B cell (primary cell): ENCODE measurements at regions of chr2 and their contacts with region 1.

Region 1: GRCh38 chr2:161063157-161063954 is 96.9 kb upstream of the TANK start:
- DNase-seq: peak; percentile 77
- ATAC-seq: peak; percentile 89
- H3K4me3 ChIP-seq: no peak overlapping the region
- H3K4me3 Mint-ChIP-seq: no peak overlapping the region
- H3K27ac ChIP-seq: no peak overlapping the region
- H3K27ac Mint-ChIP-seq: no peak overlapping the region
- H3K4me1 ChIP-seq: peaks cover 0 to 3% of the 10 kb centered on the region in 2 donors
- H3K4me1 Mint-ChIP-seq: peaks cover 4% of the 10 kb centered on the region
- H3K27me3 ChIP-seq: no peaks in the 10 kb centered on the region
- H3K27me3 Mint-ChIP-seq: no peaks in the 10 kb centered on the region
- CTCF ChIP-seq: peak; percentile 97

Region 2: DNA sequence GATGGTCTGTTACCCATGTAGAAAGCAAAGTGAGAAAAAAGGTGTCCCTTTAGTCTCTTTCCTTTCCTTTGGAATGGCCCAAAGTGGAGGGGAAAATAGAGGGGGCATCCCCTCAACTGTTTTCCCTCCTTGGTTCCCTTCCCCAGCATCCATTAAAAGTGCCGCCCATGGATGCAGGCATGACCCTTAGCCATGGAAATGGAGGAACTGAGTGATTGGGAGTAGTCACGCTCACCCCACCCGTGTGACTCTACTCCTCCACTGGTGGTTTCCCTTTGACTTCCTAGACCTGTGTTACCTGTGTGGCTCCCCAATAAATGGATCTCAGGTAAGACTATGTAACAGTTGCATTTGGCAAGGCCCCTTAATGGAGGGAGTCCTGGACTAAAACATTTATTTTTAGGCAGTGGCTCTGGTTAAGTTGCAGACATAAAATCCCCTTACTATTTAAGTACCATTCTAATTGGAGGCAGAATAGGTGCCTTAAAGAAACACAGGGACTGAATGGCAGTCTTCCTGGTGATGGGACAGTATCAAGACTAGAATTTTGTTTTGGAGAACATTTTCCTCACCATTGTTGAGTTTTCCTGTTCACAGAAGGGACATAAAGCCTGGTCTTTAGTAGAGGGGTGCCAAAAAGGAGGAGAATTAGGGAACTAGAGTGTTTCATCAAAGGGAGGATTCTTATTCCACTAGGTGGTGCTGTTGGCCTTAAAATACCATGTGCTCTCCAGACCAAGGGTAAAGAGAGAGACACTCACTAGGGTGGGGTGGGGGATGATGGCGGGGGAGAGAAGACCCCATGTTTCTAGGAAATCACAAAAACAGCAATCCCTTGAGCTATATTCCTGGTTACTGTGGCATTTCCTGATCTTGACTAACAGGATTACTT is 975.3 kb before region 1 on chr2:
- CTCF ChIA-PET with region 1: no interaction called
- POLR2A ChIA-PET with region 1: no interaction called
- intact Hi-C with region 1: no loop called
- DNase-seq: peak; percentile 6
- ATAC-seq: no peak
- H3K4me3 ChIP-seq: no peak overlapping the region
- H3K4me3 Mint-ChIP-seq: no peak overlapping the region
- H3K27ac ChIP-seq: no peak overlapping the region
- H3K27ac Mint-ChIP-seq: no peak overlapping the region
- H3K4me1 ChIP-seq: no peaks in the 10 kb centered on the region
- H3K4me1 Mint-ChIP-seq: no peaks in the 10 kb centered on the region
- H3K27me3 ChIP-seq: peaks cover 0 to 6% (median 0%) of the 10 kb centered on the region in 4 experiments
- H3K27me3 Mint-ChIP-seq: peaks cover 9% of the 10 kb centered on the region
- CTCF ChIP-seq: no peak

Region 3: DNA sequence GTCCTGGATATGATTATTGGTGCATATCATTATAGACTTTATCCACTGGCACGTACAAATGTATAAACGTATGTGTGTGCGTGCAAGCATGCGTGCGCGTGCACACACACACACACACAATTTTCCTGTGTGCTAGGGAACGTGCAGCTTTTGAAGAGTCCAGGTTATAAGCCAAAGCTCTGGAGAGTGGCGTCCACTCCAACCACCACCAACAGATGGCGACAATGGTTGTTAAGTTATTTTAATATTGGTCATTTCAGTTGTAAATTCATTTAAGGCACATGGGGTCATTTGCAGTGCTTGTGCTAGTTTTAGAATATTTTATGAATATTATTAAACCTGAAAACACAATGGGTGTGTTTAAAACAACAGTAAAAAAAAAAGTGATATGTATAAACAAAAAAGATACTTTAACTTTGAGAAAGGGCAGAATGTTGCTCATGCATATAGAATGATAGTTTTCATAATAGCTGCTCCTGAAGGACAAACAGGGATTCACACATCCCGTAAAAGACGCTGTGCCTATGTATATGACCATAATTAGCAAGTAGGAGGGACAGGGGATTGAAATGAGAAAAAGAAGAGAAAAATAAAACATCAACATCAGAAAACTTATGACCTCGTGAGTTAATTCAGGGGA is 739.1 kb before region 1 on chr2:
- CTCF ChIA-PET with region 1: interaction called, 12 read pairs
- POLR2A ChIA-PET with region 1: no interaction called
- intact Hi-C with region 1: loop called (anchors 2 kb)
- DNase-seq: peak; percentile 55
- ATAC-seq: peak; percentile 14
- H3K4me3 ChIP-seq: no peak overlapping the region
- H3K4me3 Mint-ChIP-seq: no peak overlapping the region
- H3K27ac ChIP-seq: no peak overlapping the region
- H3K27ac Mint-ChIP-seq: no peak overlapping the region
- H3K4me1 ChIP-seq: peaks cover 4 to 14% of the 10 kb centered on the region in 2 donors
- H3K4me1 Mint-ChIP-seq: peaks cover 56% of the 10 kb centered on the region
- H3K27me3 ChIP-seq: no peaks in the 10 kb centered on the region
- H3K27me3 Mint-ChIP-seq: no peaks in the 10 kb centered on the region
- CTCF ChIP-seq: peak; percentile 81

Region 4: DNA sequence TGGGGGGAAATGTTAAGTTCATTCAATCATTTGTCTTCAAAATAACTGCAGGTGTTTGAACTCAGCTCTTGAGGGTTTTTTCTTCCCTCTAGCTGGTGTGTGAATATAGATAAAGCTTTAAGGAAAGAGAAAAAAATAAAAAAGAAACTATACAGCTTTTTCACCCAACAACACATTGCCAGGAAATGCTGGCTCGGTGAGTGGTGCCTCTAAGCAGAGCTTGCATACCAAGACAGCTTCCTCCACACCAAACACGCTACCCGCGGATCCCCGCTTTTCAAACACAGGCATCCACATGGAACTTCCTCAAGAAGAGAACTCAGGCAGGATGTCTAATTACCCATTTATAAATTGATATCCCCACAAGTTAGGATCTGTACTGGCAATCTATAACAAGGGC is 27.1 kb after region 1 on chr2:
- CTCF ChIA-PET with region 1: interaction called, 52 read pairs
- POLR2A ChIA-PET with region 1: no interaction called
- intact Hi-C with region 1: loop called (anchors 2 kb)
- DNase-seq: peak; percentile 58
- ATAC-seq: peak; percentile 56
- H3K4me3 ChIP-seq: peak overlapping the region; percentile 11 to 58 (median 23)
- H3K4me3 Mint-ChIP-seq: peak overlapping the region; percentile 60
- H3K27ac ChIP-seq: peak overlapping the region in 1 of 2 donors; percentile 43
- H3K27ac Mint-ChIP-seq: peak overlapping the region; percentile 84
- H3K4me1 ChIP-seq: peaks cover 30 to 33% of the 10 kb centered on the region in 2 donors
- H3K4me1 Mint-ChIP-seq: peaks cover 45% of the 10 kb centered on the region
- H3K27me3 ChIP-seq: no peaks in the 10 kb centered on the region
- H3K27me3 Mint-ChIP-seq: no peaks in the 10 kb centered on the region
- CTCF ChIP-seq: no peak

Region 5: GRCh38 chr2:161160226-161161069 is 97.1 kb after region 1 on chr2 and contains the start of gene TANK:
- CTCF ChIA-PET with region 1: interaction called, 5 read pairs
- POLR2A ChIA-PET with region 1: no interaction called
- intact Hi-C with region 1: loop called (anchors 5 kb)
- DNase-seq: peak; percentile 96
- ATAC-seq: peak; percentile 95
- H3K4me3 ChIP-seq: peak within 1 kb of the TSS; percentile 90 to 99 (median 96)
- H3K4me3 Mint-ChIP-seq: peak within 1 kb of the TSS; percentile 95
- H3K27ac ChIP-seq: peak within 1 kb of the TSS; percentile 93 to 97
- H3K27ac Mint-ChIP-seq: peak within 1 kb of the TSS; percentile 96
- H3K4me1 ChIP-seq: peaks cover 37 to 45% of the 10 kb centered on the region in 2 donors
- H3K4me1 Mint-ChIP-seq: peaks cover 77% of the 10 kb centered on the region
- H3K27me3 ChIP-seq: no peaks in the 10 kb centered on the region
- H3K27me3 Mint-ChIP-seq: no peaks in the 10 kb centered on the region
- CTCF ChIP-seq: no peak
- total RNA-seq, gene TANK: 179 and 191 TPM in 2 replicates

Region 6: DNA sequence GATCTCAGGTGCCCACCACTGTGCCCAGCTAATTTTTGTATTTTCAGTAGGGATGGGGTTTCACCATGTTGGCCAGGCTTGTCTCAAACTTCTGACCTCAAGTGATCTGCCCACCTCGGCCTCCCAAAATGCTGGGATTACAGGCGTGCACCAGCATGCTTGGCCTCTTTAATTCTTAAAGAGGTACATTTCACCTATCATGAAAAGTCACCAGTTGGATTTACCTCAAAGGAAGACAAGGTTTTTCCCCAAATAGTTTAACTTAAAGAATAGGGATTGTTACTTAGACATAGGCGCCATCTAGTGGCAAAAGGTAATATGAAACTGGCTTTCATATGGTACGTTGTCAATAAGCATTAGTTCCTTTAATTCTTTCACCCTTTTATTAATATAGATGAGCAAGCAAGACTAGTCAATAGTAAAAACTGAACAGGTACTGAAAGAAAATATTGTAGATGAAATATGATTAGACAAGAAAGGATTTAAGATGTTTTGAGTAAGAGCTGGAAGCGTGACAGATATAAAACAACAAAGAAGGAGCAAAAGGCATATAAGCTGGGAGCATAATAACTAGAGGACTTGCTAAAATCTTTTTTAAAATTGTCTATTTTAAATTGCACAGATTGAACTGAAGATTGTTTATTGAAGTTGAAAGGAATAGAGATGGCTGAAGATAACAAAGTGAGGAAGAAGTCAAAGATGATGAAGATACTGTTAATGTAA is 209.8 kb after region 1 on chr2:
- CTCF ChIA-PET with region 1: interaction called, 11 read pairs
- POLR2A ChIA-PET with region 1: no interaction called
- intact Hi-C with region 1: loop called (anchors 1 kb)
- DNase-seq: peak; percentile 76
- ATAC-seq: peak; percentile 39
- H3K4me3 ChIP-seq: no peak overlapping the region
- H3K4me3 Mint-ChIP-seq: no peak overlapping the region
- H3K27ac ChIP-seq: no peak overlapping the region
- H3K27ac Mint-ChIP-seq: no peak overlapping the region
- H3K4me1 ChIP-seq: no peaks in the 10 kb centered on the region
- H3K4me1 Mint-ChIP-seq: no peaks in the 10 kb centered on the region
- H3K27me3 ChIP-seq: no peaks in the 10 kb centered on the region
- H3K27me3 Mint-ChIP-seq: no peaks in the 10 kb centered on the region
- CTCF ChIP-seq: peak; percentile 98